CD4-positive, alpha-beta memory T cell (primary cell): ENCODE measurements at regions of chr16 and their contacts with region 1.

Region 1: DNA sequence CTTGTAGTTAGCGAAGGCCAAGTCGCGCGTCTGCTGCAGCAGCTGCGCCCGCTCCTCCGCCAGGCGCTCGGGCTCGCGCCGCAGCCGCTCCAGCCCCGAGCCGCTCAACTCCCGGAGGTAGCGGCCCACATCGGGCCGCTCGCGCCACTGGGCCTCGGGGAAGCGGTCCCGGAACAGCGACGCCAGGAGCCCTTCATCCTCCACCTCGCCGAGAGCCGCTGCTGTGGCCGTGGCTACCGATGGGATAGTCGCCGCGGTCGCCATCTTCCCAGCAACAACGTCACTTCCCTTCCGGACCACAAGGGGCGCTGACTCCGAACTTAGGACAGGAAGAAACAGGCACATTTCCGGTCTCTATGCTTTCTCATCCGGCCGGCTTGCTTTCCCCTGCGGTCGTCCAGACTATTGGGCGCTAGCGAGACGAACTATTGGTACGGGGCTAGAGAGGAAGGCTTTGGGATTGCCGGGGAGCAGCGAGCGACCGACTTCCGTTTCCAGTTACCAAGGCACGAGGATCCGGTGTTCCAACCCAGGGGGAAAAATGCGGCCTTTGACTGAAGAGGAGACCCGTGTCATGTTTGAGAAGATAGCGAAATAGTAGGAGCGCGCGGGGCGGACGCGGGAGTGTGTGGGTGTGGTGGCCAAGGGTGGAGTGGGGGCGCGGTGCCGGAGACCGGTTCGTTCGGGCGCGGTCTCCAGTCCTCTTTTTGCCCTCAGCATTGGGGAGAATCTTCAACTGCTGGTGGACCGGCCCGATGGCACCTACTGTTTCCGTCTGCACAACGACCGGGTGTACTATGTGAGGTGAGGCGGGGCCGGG is at the starts of genes COG8 and NIP7:
- DNase-seq: peak; percentile 90 to 94 (median 91)
- H3K4me3 ChIP-seq: peak within 1 kb of the TSS; percentile 77 to 97
- H3K4me3 Mint-ChIP-seq: peak within 1 kb of the TSS; percentile 96 to 100 (median 100)
- H3K27ac ChIP-seq: peak within 1 kb of the TSS; percentile 81
- H3K27ac Mint-ChIP-seq: peak within 1 kb of the TSS; percentile 96 to 100 (median 99)
- H3K4me1 ChIP-seq: peaks cover 39% of the 10 kb centered on the region
- H3K4me1 Mint-ChIP-seq: peaks cover 34 to 74% (median 51%) of the 10 kb centered on the region in 4 donors
- H3K27me3 ChIP-seq: no peaks in the 10 kb centered on the region
- H3K27me3 Mint-ChIP-seq: no peaks in the 10 kb centered on the region
- total RNA-seq, gene COG8: 66.0 to 66.1 TPM
- total RNA-seq, gene NIP7: 30.9 to 31.9 TPM

Region 2: GRCh38 chr16:69386596-69386995 is 47.1 kb after region 1 on chr16:
- CTCF ChIA-PET with region 1: interaction called, 3 read pairs
- POLR2A ChIA-PET with region 1: interaction called, 5 read pairs
- intact Hi-C with region 1: loop called (anchors 1 kb)
- DNase-seq: no peak
- H3K4me3 ChIP-seq: no peak overlapping the region
- H3K4me3 Mint-ChIP-seq: peak overlapping the region in 6 of 8 donors; percentile 48 to 98 (median 91)
- H3K27ac ChIP-seq: peak overlapping the region; percentile 81
- H3K27ac Mint-ChIP-seq: peak overlapping the region in 5 of 7 donors; percentile 59 to 98 (median 96)
- H3K4me1 ChIP-seq: peaks cover 30% of the 10 kb centered on the region
- H3K4me1 Mint-ChIP-seq: peaks cover 17 to 41% (median 27%) of the 10 kb centered on the region in 4 donors
- H3K27me3 ChIP-seq: no peaks in the 10 kb centered on the region
- H3K27me3 Mint-ChIP-seq: no peaks in the 10 kb centered on the region

Region 3: DNA sequence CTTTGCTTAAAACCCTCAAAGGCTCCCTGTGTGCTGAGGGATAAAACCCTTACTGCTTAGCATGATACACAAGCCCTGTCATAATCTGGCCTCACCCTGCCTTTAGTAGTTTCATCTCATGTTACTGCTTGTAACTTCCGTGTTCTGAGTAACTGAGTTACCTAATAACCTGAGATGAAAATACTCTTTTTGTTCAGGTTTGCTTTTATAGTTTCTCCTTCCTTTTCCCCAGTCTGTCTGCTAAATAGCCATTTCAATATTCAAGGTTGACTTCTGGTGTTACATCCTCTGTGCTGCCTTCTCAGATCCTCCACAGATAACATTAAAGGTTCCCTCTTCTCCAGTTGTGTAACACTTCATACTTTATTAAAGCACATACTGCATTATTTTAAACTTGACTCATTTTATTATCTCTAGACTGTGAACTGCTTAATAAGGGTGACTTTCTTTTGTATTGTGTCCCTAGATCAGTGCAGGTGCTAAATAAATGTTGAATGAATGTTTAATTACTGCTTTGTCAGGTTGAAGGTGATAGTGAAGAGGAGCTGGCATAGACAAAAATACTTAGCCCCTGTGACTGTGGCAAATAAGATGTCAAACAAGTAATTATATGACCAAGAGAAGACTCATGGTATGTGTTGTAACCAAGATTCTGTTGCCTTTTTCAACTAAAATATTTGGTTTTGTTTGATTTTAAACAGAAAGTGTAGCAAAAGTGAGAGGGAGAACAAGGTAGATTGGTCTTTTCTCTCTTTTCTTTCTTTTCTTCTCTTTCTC is 274.1 kb after region 1 on chr16:
- CTCF ChIA-PET with region 1: no interaction called
- POLR2A ChIA-PET with region 1: no interaction called
- intact Hi-C with region 1: no loop called
- DNase-seq: no peak
- H3K4me3 ChIP-seq: no peak overlapping the region
- H3K4me3 Mint-ChIP-seq: no peak overlapping the region
- H3K27ac ChIP-seq: no peak overlapping the region
- H3K27ac Mint-ChIP-seq: peak overlapping the region in 6 of 7 donors; percentile 9 to 70 (median 30)
- H3K4me1 ChIP-seq: peaks cover 27% of the 10 kb centered on the region
- H3K4me1 Mint-ChIP-seq: peaks cover 42 to 68% (median 59%) of the 10 kb centered on the region in 4 donors
- H3K27me3 ChIP-seq: no peaks in the 10 kb centered on the region
- H3K27me3 Mint-ChIP-seq: no peaks in the 10 kb centered on the region

Region 4: GRCh38 chr16:69804297-69804696 is 464.8 kb after region 1 on chr16:
- CTCF ChIA-PET with region 1: no interaction called
- POLR2A ChIA-PET with region 1: no interaction called
- intact Hi-C with region 1: no loop called
- DNase-seq: no peak
- H3K4me3 ChIP-seq: no peak overlapping the region
- H3K4me3 Mint-ChIP-seq: no peak overlapping the region
- H3K27ac ChIP-seq: no peak overlapping the region
- H3K27ac Mint-ChIP-seq: peak overlapping the region in 2 of 7 donors; percentile 20 to 22
- H3K4me1 ChIP-seq: no peaks in the 10 kb centered on the region
- H3K4me1 Mint-ChIP-seq: peaks cover 0 to 1% (median 0%) of the 10 kb centered on the region in 4 donors
- H3K27me3 ChIP-seq: no peaks in the 10 kb centered on the region
- H3K27me3 Mint-ChIP-seq: no peaks in the 10 kb centered on the region